ENCODE measurements at regions of chr12 and their contacts with region 1.

Region 1: GRCh38 chr12:57904848-57905811 is 36.2 kb upstream of the ATP23 start:
- DNase-seq: peak; percentile 88
- ATAC-seq: peak; percentile 97
- H3K4me3 Mint-ChIP-seq: no peak overlapping the region
- H3K27ac Mint-ChIP-seq: no peak overlapping the region
- H3K4me1 Mint-ChIP-seq: peaks cover 8% of the 10 kb centered on the region
- H3K27me3 Mint-ChIP-seq: peaks cover 20% of the 10 kb centered on the region

Region 2: GRCh38 chr12:57754411-57755193 is 150.5 kb before region 1 on chr12 and contains the start of gene MARCHF9:
- CTCF ChIA-PET with region 1: interaction called, 37 read pairs
- DNase-seq: peak; percentile 90
- ATAC-seq: peak; percentile 49
- H3K4me3 Mint-ChIP-seq: peak within 1 kb of the TSS; percentile 82
- H3K27ac Mint-ChIP-seq: peak within 1 kb of the TSS; percentile 81
- H3K4me1 Mint-ChIP-seq: peaks cover 56% of the 10 kb centered on the region
- H3K27me3 Mint-ChIP-seq: no peaks in the 10 kb centered on the region
- total RNA-seq, gene MARCHF9: 21.0 to 24.9 TPM

Region 3: GRCh38 chr12:57803319-57803893 is 101.7 kb before region 1 on chr12:
- CTCF ChIA-PET with region 1: interaction called, 42 read pairs
- DNase-seq: peak; percentile 49
- ATAC-seq: no peak
- H3K4me3 Mint-ChIP-seq: no peak overlapping the region
- H3K27ac Mint-ChIP-seq: no peak overlapping the region
- H3K4me1 Mint-ChIP-seq: no peaks in the 10 kb centered on the region
- H3K27me3 Mint-ChIP-seq: no peaks in the 10 kb centered on the region

Region 4: GRCh38 chr12:57836442-57837375 is 68.4 kb before region 1 on chr12:
- CTCF ChIA-PET with region 1: interaction called, 68 read pairs
- DNase-seq: peak; percentile 75
- ATAC-seq: peak; percentile 59
- H3K4me3 Mint-ChIP-seq: peak overlapping the region; percentile 51
- H3K27ac Mint-ChIP-seq: peak overlapping the region; percentile 89
- H3K4me1 Mint-ChIP-seq: peaks cover 84% of the 10 kb centered on the region
- H3K27me3 Mint-ChIP-seq: no peaks in the 10 kb centered on the region

Region 5: GRCh38 chr12:57865090-57865751 is 39.9 kb before region 1 on chr12:
- CTCF ChIA-PET with region 1: interaction called, 11 read pairs
- DNase-seq: peak; percentile 65
- ATAC-seq: peak; percentile 89
- H3K4me3 Mint-ChIP-seq: peak overlapping the region; percentile 64
- H3K27ac Mint-ChIP-seq: no peak overlapping the region
- H3K4me1 Mint-ChIP-seq: peaks cover 8% of the 10 kb centered on the region
- H3K27me3 Mint-ChIP-seq: peaks cover 21% of the 10 kb centered on the region

Region 6: GRCh38 chr12:57888409-57889157 is 16.5 kb before region 1 on chr12:
- CTCF ChIA-PET with region 1: interaction called, 30 read pairs
- DNase-seq: peak; percentile 53
- ATAC-seq: peak; percentile 76
- H3K4me3 Mint-ChIP-seq: no peak overlapping the region
- H3K27ac Mint-ChIP-seq: no peak overlapping the region
- H3K4me1 Mint-ChIP-seq: peaks cover 13% of the 10 kb centered on the region
- H3K27me3 Mint-ChIP-seq: peaks cover 21% of the 10 kb centered on the region

Region 7: DNA sequence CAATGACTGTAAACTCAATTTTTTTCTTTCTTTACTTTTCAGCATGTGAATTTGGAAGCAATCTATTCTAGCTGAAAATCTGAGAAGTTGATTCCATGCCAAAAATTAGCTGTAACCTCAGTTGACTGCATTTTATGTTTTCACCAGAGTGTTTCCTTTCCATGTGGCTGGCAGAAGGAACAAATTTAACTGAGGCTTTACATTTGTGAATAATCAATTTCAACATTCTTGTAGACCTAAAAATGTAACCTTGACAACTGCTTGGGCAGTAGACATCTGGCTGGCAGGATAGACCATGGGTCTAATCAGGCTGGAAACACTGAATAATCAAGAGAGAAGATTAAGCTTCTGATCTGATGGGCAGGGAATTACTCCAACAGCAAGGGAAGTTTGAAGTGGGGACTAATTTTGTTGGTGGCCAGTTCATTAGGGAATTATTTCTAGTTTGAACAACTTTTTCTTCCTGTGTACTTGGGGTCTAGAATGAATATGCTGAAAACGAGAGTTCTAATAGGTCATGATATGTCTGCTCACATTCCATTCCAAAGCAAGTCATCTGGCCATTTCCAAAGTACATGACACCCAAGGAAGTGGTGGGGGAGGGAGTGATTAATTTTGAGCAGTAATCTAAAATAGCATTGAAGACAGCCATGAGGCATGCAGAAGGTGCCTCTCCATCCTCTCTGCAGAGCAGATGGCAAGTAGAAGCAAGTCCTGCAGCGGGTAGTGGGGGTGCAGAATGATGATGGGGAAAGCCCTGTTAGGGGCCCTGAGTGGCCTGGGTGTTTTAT is 104.5 kb after region 1 on chr12:
- CTCF ChIA-PET with region 1: no interaction called
- DNase-seq: no peak
- ATAC-seq: no peak
- H3K4me3 Mint-ChIP-seq: no peak overlapping the region
- H3K27ac Mint-ChIP-seq: no peak overlapping the region
- H3K4me1 Mint-ChIP-seq: no peaks in the 10 kb centered on the region
- H3K27me3 Mint-ChIP-seq: no peaks in the 10 kb centered on the region

Measured in activated CD8-positive, alpha-beta memory T cell treated with anti-CD3 and anti-CD28 coated beads, Interleukin-2, amount 10 ng/mL, durations not matched to agents 7 days and 5 days (primary cell).